Heart left ventricle (tissue), 16 donors: ENCODE measurements at regions of chr9 and their contacts with region 1.

Region 1: DNA sequence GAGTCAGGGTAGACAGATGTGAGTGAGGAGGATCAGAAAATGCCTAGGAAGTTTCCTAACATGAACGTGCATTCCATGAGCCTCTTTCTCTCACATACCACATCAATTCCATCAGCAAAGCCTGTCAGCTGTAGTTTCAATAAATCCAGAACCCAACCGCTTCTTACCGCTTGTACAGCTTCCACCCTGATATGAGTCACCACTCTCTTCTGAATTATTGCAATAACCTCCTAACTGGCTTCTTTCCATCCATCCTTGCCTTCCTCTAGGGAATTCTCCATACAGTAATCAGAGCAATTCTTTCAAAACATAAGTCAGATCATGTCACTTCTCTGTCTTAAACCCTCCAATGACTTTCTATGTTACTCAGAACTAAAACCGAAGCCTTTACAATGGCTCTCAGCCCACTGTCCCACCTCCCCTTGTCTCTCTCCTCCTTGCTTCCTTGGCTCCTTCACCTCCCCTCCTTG is 8.1 kb upstream of the RAD23B start:
- DNase-seq: no peak
- ATAC-seq: peak in 3 of 4 donors; percentile 69 to 94 (median 71)
- H3K4me3 ChIP-seq: no peak overlapping the region
- H3K27ac ChIP-seq: peak overlapping the region in 1 of 12 donors; percentile 46
- H3K4me1 ChIP-seq: peaks cover 0 to 18% (median 5%) of the 10 kb centered on the region in 12 donors
- H3K27me3 ChIP-seq: peaks cover 0 to 4% (median 0%) of the 10 kb centered on the region in 9 donors
- CTCF ChIP-seq: no peak
- POLR2A ChIP-seq: no peak

Region 2: GRCh38 chr9:107213561-107214028 is 61.4 kb before region 1 on chr9:
- intact Hi-C with region 1: loop called in 1 of 10 experiments (anchors 10 kb)
- DNase-seq: no peak
- ATAC-seq: peak in 1 of 4 donors; percentile 44
- H3K4me3 ChIP-seq: no peak overlapping the region
- H3K27ac ChIP-seq: no peak overlapping the region
- H3K4me1 ChIP-seq: peaks cover 0 to 10% (median 0%) of the 10 kb centered on the region in 12 donors
- H3K27me3 ChIP-seq: no peaks in the 10 kb centered on the region
- CTCF ChIP-seq: no peak
- POLR2A ChIP-seq: no peak